Activated naive CD4-positive, alpha-beta T cell treated with anti-CD3 and anti-CD28 coated beads for 36 hours (primary cell): ENCODE measurements at regions of chr6 and their contacts with region 1.

Region 1: DNA sequence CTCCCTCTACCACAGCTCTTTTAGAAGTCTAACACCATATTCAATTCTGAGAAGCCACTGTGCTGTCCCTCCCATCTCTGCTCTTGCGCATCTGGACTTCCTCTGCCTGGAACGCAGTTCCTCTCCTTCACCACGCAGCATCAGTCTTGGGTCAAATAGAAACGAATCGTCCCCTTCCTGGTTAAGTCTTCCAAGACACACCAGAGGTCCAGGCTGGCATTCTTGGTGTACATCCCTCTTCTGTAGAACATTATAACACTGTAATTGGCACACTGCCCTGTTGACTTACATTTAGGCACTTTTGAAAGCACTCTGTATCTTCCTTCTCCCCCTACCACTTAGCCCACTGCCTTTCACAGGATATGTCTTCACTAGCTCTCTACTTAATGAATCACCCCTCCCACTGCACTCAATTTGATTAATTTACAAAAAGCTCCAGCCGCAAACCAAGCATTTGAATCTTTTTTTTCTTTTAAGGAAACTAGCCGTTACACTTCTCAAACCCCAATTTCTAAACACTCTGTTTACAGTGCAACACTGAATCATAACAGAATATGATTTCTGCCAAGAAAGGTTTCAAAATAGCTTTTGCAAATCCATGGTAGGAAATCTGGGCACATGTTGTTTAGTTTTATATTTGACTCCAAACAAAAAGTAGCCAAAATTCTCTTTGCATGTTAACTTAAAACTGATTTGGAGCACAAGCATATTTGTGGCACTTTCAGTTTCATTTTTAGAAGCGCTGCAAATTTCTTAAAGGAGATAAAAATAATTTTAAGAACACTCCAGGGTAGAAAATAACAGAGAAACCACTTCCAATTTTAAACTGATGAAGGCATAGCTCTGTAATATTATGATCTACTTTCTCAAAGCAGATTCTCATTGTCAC is 140.7 kb upstream of the CARMIL1 start:
- DNase-seq: peak; percentile 82
- H3K4me3 Mint-ChIP-seq: peak overlapping the region; percentile 88
- H3K27ac Mint-ChIP-seq: peak overlapping the region; percentile 98
- H3K4me1 Mint-ChIP-seq: peaks cover 46% of the 10 kb centered on the region
- H3K27me3 Mint-ChIP-seq: no peaks in the 10 kb centered on the region

Region 2: GRCh38 chr6:24774696-24775519 is 363.6 kb before region 1 on chr6 and contains the start of gene GMNN:
- CTCF ChIA-PET with region 1: no interaction called
- intact Hi-C with region 1: loop called (anchors 1 kb)
- DNase-seq: peak; percentile 99
- H3K4me3 Mint-ChIP-seq: peak within 1 kb of the TSS; percentile 96
- H3K27ac Mint-ChIP-seq: peak within 1 kb of the TSS; percentile 98
- H3K4me1 Mint-ChIP-seq: peaks cover 30% of the 10 kb centered on the region
- H3K27me3 Mint-ChIP-seq: no peaks in the 10 kb centered on the region
- total RNA-seq, gene GMNN: 84.9 to 85.1 TPM

Region 3: DNA sequence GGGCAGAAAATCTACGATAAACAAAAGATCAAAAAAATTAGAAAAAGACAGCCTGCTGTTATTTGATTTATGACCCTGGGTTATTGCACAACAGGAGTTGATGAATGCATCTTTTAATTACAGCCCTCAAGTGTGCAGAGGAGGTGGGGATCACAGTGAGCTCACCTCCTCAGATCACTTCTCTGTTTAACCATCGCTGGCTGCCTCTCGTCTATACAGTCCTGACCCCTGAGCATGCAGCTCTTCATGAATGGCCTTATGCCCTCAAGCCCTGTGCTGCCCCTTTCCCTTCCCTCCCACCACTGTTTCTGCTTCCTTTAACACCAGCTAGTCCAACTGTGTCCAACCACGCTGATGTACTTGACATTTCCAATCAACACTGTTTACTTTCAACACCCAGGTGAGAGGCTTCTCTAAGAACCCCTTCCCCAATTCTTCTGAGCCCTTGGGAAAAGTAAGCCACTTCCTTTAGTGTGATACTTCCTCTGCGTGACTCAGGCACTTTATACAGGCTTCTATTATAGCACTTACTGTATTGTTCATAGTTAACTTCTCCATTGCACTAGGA is 142.1 kb before region 1 on chr6:
- CTCF ChIA-PET with region 1: no interaction called
- intact Hi-C with region 1: no loop called
- DNase-seq: no peak
- H3K4me3 Mint-ChIP-seq: no peak overlapping the region
- H3K27ac Mint-ChIP-seq: peak overlapping the region; percentile 22
- H3K4me1 Mint-ChIP-seq: peaks cover 64% of the 10 kb centered on the region
- H3K27me3 Mint-ChIP-seq: no peaks in the 10 kb centered on the region

Region 4: DNA sequence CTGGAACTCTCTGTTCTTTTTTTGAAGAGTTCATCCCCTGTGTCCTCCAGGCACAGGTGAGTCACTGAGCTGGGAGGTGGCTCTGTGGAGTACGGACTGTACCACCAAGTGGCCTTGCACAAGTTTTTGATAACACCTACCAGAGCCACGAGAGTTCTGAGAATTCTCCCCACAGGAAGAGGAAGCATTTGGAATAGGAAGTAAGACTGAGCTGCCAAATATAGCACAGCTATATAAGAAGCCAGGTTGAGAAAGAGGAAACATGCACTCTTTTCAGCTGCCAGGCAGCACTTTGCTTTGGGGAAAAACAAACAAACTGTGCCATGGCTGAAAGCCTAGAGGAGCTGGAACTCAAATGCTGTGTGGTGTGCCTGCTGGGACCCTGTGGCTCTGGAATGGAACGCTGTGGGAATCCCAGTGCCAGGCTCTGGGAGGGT is 131.9 kb before region 1 on chr6:
- CTCF ChIA-PET with region 1: no interaction called
- intact Hi-C with region 1: loop called (anchors 1 kb)
- DNase-seq: peak; percentile 72
- H3K4me3 Mint-ChIP-seq: peak overlapping the region; percentile 31
- H3K27ac Mint-ChIP-seq: peak overlapping the region; percentile 68
- H3K4me1 Mint-ChIP-seq: peaks cover 80% of the 10 kb centered on the region
- H3K27me3 Mint-ChIP-seq: no peaks in the 10 kb centered on the region

Region 5: GRCh38 chr6:25122001-25122400 is 16.5 kb before region 1 on chr6:
- CTCF ChIA-PET with region 1: no interaction called
- intact Hi-C with region 1: loop called (anchors 1 kb)
- DNase-seq: no peak
- H3K4me3 Mint-ChIP-seq: no peak overlapping the region
- H3K27ac Mint-ChIP-seq: no peak overlapping the region
- H3K4me1 Mint-ChIP-seq: peaks cover 45% of the 10 kb centered on the region
- H3K27me3 Mint-ChIP-seq: no peaks in the 10 kb centered on the region

Region 6: GRCh38 chr6:25250878-25251277 is 112.4 kb after region 1 on chr6:
- CTCF ChIA-PET with region 1: no interaction called
- intact Hi-C with region 1: loop called (anchors 1 kb)
- DNase-seq: peak; percentile 76
- H3K4me3 Mint-ChIP-seq: no peak overlapping the region
- H3K27ac Mint-ChIP-seq: peak overlapping the region; percentile 62
- H3K4me1 Mint-ChIP-seq: peaks cover 12% of the 10 kb centered on the region
- H3K27me3 Mint-ChIP-seq: no peaks in the 10 kb centered on the region

Region 7: DNA sequence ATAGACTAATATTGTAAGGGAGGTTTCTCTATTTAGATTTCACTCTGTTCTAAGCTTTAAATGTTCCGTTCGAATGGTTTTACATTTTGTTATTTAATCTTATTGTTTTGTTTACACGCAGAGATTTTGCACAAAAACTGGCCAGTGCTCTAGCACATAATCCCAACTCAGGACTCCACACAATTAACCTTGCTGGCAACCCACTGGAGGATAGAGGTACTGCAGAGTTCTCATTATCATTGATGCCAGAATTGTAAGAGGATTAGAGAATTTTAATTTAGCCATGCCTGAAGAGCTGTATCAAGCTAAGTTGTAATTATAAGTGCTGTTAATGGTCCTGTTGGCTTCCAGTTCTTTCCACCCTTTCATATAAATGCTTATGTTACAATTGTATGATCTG is 333.8 kb after region 1 on chr6:
- CTCF ChIA-PET with region 1: no interaction called
- intact Hi-C with region 1: no loop called
- DNase-seq: no peak
- H3K4me3 Mint-ChIP-seq: no peak overlapping the region
- H3K27ac Mint-ChIP-seq: no peak overlapping the region
- H3K4me1 Mint-ChIP-seq: peaks cover 2% of the 10 kb centered on the region
- H3K27me3 Mint-ChIP-seq: no peaks in the 10 kb centered on the region

Region 8: GRCh38 chr6:25962149-25963127 is 824.0 kb after region 1 on chr6 and contains the start of gene TRIM38:
- CTCF ChIA-PET with region 1: no interaction called
- intact Hi-C with region 1: loop called (anchors 2 kb)
- DNase-seq: peak; percentile 91
- H3K4me3 Mint-ChIP-seq: peak within 1 kb of the TSS; percentile 99
- H3K27ac Mint-ChIP-seq: peak within 1 kb of the TSS; percentile 99
- H3K4me1 Mint-ChIP-seq: peaks cover 76% of the 10 kb centered on the region
- H3K27me3 Mint-ChIP-seq: no peaks in the 10 kb centered on the region
- total RNA-seq, gene TRIM38: 19.1 to 19.7 TPM